Activated naive CD4-positive, alpha-beta T cell treated with anti-CD3 and anti-CD28 coated beads for 36 hours (primary cell): ENCODE measurements at regions of chr12 and their contacts with region 1.

Region 1: GRCh38 chr12:57751788-57752667 is at the start of gene CDK4:
- DNase-seq: peak; percentile 99
- H3K4me3 Mint-ChIP-seq: peak within 1 kb of the TSS; percentile 100
- H3K27ac Mint-ChIP-seq: peak within 1 kb of the TSS; percentile 99
- H3K4me1 Mint-ChIP-seq: peaks cover 51% of the 10 kb centered on the region
- H3K27me3 Mint-ChIP-seq: no peaks in the 10 kb centered on the region
- total RNA-seq, gene CDK4: 194 to 202 TPM

Region 2: GRCh38 chr12:57621497-57622292 is 130.3 kb before region 1 on chr12:
- CTCF ChIA-PET with region 1: no interaction called
- intact Hi-C with region 1: no loop called
- DNase-seq: peak; percentile 65
- H3K4me3 Mint-ChIP-seq: peak overlapping the region; percentile 71
- H3K27ac Mint-ChIP-seq: no peak overlapping the region
- H3K4me1 Mint-ChIP-seq: peaks cover 27% of the 10 kb centered on the region
- H3K27me3 Mint-ChIP-seq: peaks cover 86% of the 10 kb centered on the region

Region 3: DNA sequence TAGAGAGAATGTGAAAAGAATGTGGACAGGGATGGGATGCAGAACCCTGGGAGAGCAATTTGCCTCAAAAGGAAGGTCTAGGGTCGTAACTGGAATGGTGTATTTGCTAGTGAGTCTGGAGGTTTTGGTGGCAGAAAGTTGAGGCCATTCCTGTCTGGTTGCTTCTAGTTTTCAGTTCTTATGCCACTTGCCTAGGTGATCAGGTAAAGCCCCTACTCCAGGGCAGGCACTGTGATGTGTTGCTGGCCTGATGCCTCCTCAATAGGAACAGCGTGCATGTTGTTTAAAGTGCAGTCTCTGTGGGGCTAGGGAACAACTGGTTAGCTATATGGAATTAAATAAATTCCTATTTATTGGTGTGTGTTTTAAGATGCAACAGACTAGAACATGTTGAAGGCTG is 51.7 kb before region 1 on chr12:
- CTCF ChIA-PET with region 1: no interaction called
- intact Hi-C with region 1: no loop called
- DNase-seq: no peak
- H3K4me3 Mint-ChIP-seq: no peak overlapping the region
- H3K27ac Mint-ChIP-seq: no peak overlapping the region
- H3K4me1 Mint-ChIP-seq: peaks cover 3% of the 10 kb centered on the region
- H3K27me3 Mint-ChIP-seq: no peaks in the 10 kb centered on the region

Region 4: GRCh38 chr12:57765042-57765697 is 13.1 kb after region 1 on chr12:
- CTCF ChIA-PET with region 1: interaction called, 42 read pairs
- intact Hi-C with region 1: loop called (anchors 1 kb)
- DNase-seq: peak; percentile 80
- H3K4me3 Mint-ChIP-seq: peak overlapping the region; percentile 88
- H3K27ac Mint-ChIP-seq: peak overlapping the region; percentile 63
- H3K4me1 Mint-ChIP-seq: peaks cover 30% of the 10 kb centered on the region
- H3K27me3 Mint-ChIP-seq: peaks cover 6% of the 10 kb centered on the region

Region 5: DNA sequence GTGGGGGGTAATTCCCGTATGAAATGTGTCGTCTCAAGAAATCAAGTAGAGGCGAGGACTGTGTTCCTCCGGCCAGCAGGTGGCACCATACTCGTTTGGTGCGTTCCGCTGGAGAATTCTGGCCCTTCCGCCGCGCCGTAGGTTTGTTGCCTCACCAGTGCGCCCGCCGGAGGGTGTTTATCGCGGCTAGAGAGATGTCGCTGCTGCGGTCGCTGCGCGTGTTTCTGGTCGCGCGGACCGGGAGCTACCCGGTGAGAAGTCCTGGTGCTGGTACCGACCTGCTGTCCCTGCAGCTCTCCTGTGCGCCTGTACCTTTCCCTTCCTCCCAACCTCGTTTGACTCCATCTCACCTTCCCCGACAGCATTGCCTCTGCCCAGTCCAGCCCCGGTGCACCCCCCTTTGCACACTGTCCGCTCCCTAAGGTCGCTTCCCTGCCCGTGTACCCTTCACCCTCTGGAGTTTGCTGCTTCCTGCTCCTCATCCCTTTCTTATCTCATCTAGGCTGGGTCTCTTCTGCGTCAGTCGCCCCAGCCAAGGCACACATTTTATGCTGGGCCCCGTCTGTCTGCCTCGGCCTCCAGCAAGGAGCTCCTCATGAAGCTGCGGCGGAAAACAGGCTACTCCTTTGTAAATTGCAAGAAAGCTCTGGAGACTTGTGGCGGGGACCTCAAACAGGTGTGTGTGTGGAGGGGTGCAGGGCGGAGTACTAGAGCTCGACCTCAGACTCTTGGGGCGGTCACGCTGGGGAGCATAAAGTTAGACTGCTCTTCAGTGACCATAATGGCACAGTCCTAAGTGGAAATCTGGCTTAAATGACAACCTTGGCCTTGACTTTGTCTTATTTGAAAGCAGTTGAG is 30.8 kb after region 1 on chr12 and contains the start of gene TSFM:
- CTCF ChIA-PET with region 1: interaction called, 8 read pairs
- intact Hi-C with region 1: loop called (anchors 1 kb)
- DNase-seq: peak; percentile 99
- H3K4me3 Mint-ChIP-seq: peak within 1 kb of the TSS; percentile 100
- H3K27ac Mint-ChIP-seq: peak within 1 kb of the TSS; percentile 86
- H3K4me1 Mint-ChIP-seq: peaks cover 29% of the 10 kb centered on the region
- H3K27me3 Mint-ChIP-seq: no peaks in the 10 kb centered on the region
- total RNA-seq, gene TSFM: 32.8 to 34.3 TPM

Region 6: GRCh38 chr12:57846577-57847319 is 94.7 kb after region 1 on chr12 and contains the start of gene CTDSP2:
- CTCF ChIA-PET with region 1: interaction called, 5 read pairs
- intact Hi-C with region 1: loop called (anchors 1 kb)
- DNase-seq: peak; percentile 93
- H3K4me3 Mint-ChIP-seq: peak within 1 kb of the TSS; percentile 88
- H3K27ac Mint-ChIP-seq: peak within 1 kb of the TSS; percentile 92
- H3K4me1 Mint-ChIP-seq: peaks cover 44% of the 10 kb centered on the region
- H3K27me3 Mint-ChIP-seq: peaks cover 7% of the 10 kb centered on the region
- total RNA-seq, gene CTDSP2: 94.6 to 99.8 TPM